Posterior vena cava (tissue), 2 donors: ENCODE measurements at regions of chr9 and their contacts with region 1.

Region 1: DNA sequence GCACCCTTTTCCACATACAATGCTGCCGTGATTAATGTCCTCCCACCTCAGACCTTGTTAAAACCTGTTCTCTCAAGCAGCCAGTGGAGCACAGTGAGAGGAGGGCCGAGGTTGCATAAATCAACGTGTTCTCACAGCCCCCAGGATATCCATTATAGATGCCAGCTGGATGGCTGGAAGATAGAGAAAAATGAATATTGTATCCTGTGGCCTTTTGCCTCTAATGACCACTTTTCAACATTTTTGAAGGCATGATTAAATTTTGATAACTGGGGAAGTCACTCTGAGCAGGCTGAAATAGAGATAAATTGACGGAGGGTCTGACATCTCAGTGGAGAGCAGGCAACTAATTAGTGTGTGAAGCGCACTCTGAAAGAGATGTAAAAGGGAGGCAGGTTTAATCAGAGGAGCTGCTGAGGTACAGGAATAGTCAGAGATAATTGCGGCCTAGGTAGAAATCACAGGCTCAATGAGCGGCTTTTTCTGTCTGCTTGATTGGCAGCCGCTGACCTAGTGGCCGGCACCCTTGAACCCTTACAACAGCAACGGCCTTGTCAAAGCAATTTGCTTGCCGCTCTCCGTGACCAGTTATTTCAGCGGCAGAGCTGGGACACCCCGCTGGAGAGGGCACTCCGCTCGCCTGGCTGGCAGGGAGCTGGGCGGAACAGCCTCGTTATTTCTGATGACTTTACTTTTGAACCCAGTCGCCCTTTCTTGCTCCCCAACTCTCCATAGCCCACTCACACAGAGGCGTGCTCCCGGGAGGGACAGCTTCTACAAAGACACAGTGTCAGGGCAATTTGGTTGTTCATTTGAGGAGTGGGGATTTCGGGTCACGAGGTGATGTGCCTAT is 560.7 kb downstream of the PSAT1 start:
- DNase-seq: no peak

Region 2: DNA sequence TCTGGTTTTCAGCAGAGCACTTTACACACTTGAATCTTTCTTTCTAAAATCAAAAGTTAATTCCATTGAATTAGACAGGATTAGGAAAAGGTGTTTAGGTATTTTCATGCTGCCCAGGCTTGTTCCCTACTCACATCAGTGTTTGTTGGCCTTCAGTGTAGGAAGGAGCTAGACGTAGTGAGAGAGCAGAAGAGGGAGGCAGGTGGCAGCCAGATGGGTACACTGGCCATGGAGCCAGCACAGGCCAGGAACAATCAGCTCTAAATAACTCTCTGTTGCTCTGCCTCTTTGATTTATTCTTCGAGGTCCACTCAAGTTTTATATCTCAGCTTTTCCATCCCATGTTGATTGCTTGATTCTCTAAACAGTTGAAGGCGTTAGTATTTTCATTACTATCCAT is 31.1 kb before region 1 on chr9:
- intact Hi-C with region 1: loop called in 1 of 2 experiments (anchors 1 kb)
- DNase-seq: no peak

Region 3: DNA sequence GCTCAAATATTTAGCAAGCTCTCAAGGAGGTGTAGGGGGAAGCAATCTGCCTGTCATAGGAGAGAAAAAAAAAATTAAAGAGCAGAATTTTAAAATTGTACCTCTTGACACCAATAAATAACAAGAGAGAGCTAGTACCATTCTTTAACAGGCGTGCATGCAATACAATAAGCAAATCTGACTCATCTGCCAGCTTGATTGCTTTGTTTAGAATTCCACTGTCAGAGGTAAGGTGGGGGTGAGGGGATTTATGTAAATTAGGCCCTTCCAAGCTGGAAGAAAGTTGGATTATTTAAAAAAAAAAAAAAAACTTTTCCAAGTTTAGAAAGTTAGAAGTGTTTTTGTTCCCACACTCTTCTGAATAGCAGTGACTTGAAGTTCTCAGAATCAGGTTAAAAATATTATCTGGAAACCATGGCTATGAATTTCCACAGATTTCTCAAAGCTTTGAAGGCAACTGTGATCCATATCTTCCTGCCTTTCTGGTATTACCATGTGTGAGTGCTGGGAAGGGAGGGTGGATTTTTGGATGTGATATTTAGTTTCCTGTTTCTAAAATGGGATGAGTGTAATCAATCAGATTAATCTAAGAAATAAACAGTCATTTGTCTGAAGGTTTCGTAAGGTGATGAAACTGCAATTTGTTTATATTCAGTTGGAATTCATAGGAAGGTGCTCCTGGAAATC is 1191.6 kb after region 1 on chr9:
- intact Hi-C with region 1: no loop called
- DNase-seq: no peak